ENCODE measurements at regions of chr6 and their contacts with region 1.

Region 1: DNA sequence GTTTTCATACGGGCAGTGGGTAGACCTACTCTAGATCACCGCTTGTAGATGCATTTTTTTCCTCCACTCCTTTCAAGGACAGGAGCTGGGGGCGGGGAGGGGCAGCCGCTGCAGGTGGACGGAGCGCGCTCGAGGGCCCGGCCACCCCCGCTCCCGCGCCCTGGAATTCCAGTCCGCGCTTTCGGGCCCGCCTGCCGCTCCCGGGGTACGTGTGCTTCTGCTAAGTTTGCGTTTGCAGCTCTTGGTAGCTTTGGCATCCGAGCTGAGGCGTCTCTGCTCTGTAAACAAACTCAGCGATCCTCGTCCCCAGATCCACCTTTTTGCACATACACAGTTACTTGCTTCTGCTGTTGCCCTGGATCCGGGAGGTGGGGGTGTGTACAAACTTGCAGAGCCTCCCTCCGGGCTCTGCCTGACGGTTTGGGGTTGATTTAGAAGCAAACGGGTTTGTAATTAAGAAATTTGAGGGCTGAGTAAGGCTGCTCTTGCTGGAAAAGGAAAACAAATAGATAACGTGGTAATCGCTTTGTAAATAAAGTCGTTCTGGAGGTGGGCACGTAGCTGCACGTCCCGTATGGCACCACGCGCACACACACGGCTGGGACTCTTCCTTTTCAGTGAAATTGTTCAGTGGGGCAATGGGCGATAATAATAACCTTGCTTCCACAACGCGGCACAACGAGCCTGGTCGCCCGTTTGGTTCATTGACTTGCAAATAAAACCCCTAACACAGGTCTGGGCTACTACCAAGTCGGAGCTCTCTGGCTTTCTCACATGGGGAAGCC is 976 bp upstream of the CITED2 start:
- DNase-seq: peak; percentile 97
- H3K4me3 ChIP-seq: peak overlapping the region; percentile 97
- H3K27ac ChIP-seq: peak overlapping the region; percentile 91
- H3K4me1 ChIP-seq: peaks cover 24% of the 10 kb centered on the region
- H3K27me3 ChIP-seq: no peaks in the 10 kb centered on the region

Region 2: DNA sequence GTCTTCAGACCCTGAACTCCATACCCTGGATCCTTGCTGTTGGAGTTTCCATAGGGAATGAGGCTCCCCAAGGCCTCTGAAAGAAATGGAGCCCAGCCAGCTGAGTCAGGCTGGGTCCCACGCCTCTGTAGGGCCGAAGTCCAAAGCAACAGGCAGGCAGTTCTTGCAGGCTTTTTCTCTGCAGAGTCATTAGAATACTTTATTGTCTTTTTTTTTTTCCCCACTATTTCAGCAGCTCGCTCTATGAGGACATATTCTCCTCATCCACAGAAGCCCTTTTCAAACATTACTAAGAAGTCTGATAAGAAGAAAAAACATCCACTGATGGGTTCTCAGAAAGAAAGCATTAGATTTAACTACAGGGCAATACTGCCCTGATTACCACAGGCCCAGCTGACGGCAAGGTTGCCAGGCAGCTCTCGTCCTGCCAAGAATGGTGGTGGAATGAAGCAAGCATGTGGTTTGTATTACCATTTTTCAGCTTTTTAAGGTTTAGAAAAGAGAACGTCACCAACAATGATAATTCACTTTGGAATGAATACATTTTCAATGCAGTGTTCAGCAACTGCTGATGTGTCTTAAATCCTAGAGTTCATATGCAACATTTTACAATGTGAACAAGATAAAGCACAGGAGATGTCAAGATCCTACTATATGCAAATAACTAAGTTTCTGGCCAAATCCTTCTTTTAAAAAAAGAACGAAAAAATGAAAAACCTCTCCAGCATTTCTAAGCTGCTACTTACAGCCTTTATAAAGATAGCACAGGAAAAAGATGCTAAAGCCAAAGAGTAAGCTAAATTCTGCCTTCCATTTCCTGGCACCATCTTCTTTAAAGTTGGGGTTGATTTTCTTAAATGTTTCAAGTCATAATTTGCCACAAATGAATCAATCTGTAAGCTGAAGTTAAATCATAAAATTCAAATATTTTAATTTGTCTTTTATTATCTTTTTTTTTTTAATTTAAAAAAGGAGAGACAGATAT is 222.6 kb after region 1 on chr6:
- in situ Hi-C with region 1: loop called (anchors 10 kb)
- DNase-seq: peak; percentile 96
- H3K4me3 ChIP-seq: peak overlapping the region; percentile 5
- H3K27ac ChIP-seq: peak overlapping the region; percentile 92
- H3K4me1 ChIP-seq: peaks cover 34% of the 10 kb centered on the region
- H3K27me3 ChIP-seq: no peaks in the 10 kb centered on the region

Region 3: GRCh38 chr6:139764498-139764986 is 389.1 kb after region 1 on chr6:
- in situ Hi-C with region 1: loop called (anchors 25 kb)
- DNase-seq: peak; percentile 98
- H3K4me3 ChIP-seq: 0 out of 2 replicates have a peak overlapping the region, but pooled peaks have one; percentile 10
- H3K27ac ChIP-seq: peak overlapping the region; percentile 77
- H3K4me1 ChIP-seq: peaks cover 43% of the 10 kb centered on the region
- H3K27me3 ChIP-seq: no peaks in the 10 kb centered on the region

Region 4: DNA sequence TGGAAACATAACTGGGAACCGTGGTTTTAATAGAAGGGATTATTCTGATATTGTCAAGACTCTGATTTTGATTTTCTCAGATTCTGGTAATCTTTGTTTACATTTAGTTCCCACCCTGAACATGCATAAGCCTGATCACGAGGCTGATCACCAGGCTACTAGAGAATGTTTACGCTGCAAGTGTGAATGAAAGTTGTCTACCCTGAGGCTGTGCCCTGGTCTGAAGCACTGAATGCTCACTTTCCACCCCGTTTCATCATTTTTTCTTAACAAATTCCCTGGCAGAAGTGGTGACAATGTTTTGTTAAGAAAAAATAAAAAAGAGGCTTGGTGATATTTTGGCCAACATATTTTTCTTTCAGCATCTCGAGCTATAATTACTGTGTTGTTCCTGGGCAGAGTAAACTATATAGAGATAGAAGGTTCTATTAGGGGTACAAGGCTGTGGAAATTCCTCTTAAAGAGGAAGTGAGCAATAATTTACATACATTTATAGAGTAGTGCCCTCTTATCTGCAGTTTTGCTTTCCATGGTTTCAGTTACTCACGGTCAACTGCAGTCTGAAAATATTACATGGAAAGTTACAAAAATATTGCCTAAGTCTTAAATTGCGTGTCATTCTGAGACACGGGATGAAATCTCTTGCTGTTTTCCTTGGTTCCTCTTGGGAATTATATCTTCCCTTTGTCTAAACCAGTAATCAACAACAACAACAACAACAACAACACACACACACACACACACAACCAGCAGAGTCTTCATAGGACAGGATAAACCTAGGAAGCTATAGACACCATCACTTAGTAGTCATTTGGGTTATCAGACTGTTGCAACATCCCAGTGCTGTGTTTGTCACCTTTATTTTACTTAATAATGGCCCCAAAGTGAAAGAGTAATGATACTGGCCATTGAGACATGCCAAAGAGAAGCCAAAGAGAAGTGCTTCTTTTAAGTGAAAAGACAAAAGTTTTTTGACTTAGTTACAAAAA is 565.6 kb after region 1 on chr6:
- in situ Hi-C with region 1: no loop called
- DNase-seq: no peak
- H3K4me3 ChIP-seq: no peak overlapping the region
- H3K27ac ChIP-seq: no peak overlapping the region
- H3K4me1 ChIP-seq: peaks cover 17% of the 10 kb centered on the region
- H3K27me3 ChIP-seq: no peaks in the 10 kb centered on the region

Region 5: DNA sequence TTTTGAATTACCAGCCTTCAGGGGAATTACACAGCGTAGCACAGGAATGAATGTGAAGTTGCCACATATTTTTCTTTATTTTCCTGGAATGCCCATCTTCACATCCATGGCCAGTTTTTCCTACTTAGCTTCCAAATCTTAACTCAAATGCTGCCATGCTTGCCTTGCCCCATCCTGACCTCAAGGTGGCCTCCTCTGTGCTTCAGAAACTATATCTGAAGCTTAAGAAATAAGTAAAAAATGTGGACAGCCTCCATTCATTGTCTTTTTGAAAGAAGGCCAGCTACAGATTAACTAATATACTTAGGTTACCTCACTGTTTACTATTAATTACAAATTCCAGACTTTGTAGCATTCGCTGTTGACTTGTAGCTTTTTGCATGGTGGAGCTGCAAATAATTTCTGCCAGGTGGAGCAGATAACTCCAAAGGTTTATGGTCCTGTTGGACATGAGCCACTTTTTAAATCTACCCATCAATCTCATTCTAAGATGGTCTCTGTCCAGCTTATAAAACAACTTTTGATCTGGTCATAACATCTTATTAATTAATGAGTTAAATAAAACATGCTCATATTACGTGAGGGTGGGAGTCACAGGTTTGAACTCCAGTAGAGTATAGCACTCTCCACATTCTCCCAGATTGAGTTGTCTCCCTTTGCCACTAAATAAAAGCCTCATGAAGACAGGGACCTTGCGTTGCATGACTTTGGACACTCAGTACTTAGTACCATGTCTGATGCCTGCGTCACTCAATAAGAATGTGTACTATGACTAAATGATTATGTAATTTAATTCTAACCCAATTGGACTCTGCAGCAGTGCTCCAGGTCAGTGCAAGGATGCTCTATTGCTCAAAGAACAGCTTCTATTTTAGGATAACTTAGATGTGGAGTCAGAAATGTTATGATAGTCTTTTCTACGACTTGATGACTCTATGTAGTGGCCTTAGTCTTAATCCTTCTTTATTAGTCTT is 677.6 kb after region 1 on chr6:
- in situ Hi-C with region 1: loop called (anchors 10 kb)
- DNase-seq: peak; percentile 65
- H3K4me3 ChIP-seq: no peak overlapping the region
- H3K27ac ChIP-seq: peak overlapping the region; percentile 90
- H3K4me1 ChIP-seq: peaks cover 38% of the 10 kb centered on the region
- H3K27me3 ChIP-seq: no peaks in the 10 kb centered on the region

Region 6: GRCh38 chr6:140225701-140226436 is 850.4 kb after region 1 on chr6:
- in situ Hi-C with region 1: no loop called
- DNase-seq: peak; percentile 58
- H3K4me3 ChIP-seq: no peak overlapping the region
- H3K27ac ChIP-seq: peak overlapping the region; percentile 15
- H3K4me1 ChIP-seq: peaks cover 21% of the 10 kb centered on the region
- H3K27me3 ChIP-seq: no peaks in the 10 kb centered on the region

Measured in GM23248 (cell line).